ENCODE measurements at regions of chr15 and their contacts with region 1.

Region 1: DNA sequence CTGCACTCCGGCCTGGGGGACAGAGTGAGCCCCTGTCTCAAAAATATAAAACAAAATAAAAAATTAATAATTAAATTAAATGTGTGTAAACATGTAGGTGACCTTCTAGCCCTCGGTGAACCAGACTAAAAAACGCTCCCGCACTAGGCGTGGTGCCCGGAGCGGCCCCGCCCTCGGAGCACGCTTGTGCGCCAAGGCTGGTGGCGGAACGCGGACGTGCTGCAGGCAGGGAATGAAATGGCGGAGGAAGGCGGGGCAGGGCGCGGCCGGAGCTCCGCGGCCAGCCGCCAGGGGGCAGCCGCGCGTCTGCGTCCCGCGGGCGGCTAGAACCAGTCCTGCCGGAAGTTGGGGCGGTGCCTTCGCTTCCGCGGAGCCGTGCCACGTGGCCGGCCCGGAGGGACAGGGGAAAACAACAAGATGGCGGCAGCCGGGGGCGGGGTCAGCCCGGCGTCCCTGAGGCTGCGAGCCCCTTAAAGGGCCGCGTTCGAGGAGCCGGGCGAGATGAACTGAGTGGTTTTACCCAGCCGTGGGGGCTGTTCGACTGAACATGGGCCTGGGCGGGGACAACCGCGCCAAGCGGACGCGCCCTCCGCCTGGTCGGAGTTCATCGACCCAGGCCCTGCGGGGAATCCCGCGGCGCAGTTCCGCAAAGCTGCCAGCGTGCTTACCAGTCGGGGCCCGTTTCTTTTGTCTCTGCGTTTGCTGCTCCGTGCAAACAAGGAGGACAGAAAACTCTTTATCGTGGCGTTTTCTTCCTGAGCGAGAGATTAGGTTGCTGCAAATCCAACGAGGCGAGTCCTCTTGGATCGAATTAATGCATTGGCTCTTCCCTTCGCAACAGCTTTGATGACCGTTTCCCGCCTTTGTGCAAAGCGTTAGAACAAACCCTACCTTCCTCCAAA is 90.9 kb upstream of the CHD2 start:
- DNase-seq: peak; percentile 98 to 100 (median 99)
- H3K4me3 ChIP-seq: peak overlapping the region; percentile 72 to 98 (median 78)
- H3K27ac ChIP-seq: peak overlapping the region; percentile 98 to 99
- H3K4me1 ChIP-seq: peaks cover 5 to 14% (median 8%) of the 10 kb centered on the region in 3 donors
- H3K27me3 ChIP-seq: no peaks in the 10 kb centered on the region
- CTCF ChIP-seq: peak; percentile 91

Region 2: GRCh38 chr15:92914768-92915221 is 105.6 kb after region 1 on chr15:
- intact Hi-C with region 1: loop called (anchors 5 kb)
- DNase-seq: no peak
- H3K4me3 ChIP-seq: peak overlapping the region in 2 of 3 donors; percentile 24 to 40
- H3K27ac ChIP-seq: peak overlapping the region; percentile 55 to 89
- H3K4me1 ChIP-seq: peaks cover 16 to 55% (median 39%) of the 10 kb centered on the region in 3 donors
- H3K27me3 ChIP-seq: no peaks in the 10 kb centered on the region
- CTCF ChIP-seq: no peak

Measured in kidney (tissue), 22 donors.